B cell (primary cell): ENCODE measurements at regions of chrX and their contacts with region 1.

Region 1: DNA sequence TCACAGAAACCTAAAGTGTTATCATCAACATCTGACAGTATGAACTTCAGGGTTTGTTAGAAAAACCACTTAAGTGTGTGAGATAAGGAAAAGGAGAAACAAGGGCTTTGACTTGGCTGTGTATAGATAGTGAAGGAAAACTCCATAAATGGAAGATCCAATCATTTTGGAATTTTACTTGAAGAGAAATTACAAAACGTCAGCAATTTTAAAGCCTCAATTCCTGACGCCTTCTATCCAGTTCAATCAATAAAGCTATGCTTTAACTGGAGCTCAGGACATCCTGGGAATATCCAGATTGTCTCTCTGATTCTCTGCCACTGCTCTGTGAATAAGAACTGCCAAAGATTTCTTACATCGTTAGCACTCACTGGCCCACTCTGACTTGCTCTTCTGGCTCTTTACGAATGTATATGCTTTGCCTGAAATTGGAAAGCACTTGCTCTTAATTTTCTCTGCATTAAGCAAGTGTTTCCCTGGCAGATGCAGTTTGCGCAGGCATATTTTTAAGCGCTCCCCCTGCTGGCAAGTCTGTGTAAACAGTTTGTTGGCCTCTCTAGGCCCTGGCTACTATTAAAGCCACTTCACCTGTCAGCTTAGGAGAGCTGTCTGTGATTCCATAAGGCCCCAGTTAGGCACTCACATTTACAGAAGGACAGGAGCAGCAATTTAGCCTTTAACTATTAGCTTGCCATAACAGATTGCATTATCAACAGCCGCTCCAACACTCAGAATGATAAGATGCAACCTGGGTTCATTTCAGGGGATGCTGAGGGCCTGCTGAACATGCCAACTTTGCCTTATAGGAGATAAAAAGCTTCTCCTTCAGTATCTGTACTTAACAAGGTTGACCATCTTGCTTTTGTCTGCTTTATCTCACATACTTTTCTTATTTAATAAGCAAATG is 251.4 kb upstream of the DDX53 start:
- DNase-seq: peak; percentile 56
- ATAC-seq: peak; percentile 45
- H3K4me3 ChIP-seq: no peak overlapping the region
- H3K4me3 Mint-ChIP-seq: no peak overlapping the region
- H3K27ac ChIP-seq: no peak overlapping the region
- H3K27ac Mint-ChIP-seq: no peak overlapping the region
- H3K4me1 ChIP-seq: no peaks in the 10 kb centered on the region
- H3K4me1 Mint-ChIP-seq: no peaks in the 10 kb centered on the region
- H3K27me3 ChIP-seq: no peaks in the 10 kb centered on the region
- H3K27me3 Mint-ChIP-seq: no peaks in the 10 kb centered on the region
- CTCF ChIP-seq: peak; percentile 71

Region 2: GRCh38 chrX:22192417-22193060 is 555.8 kb before region 1 on chrX:
- CTCF ChIA-PET with region 1: interaction called, 3 read pairs
- POLR2A ChIA-PET with region 1: no interaction called
- intact Hi-C with region 1: loop called (anchors 5 kb)
- DNase-seq: peak; percentile 60
- ATAC-seq: peak; percentile 64
- H3K4me3 ChIP-seq: no peak overlapping the region
- H3K4me3 Mint-ChIP-seq: peak overlapping the region; percentile 42
- H3K27ac ChIP-seq: no peak overlapping the region
- H3K27ac Mint-ChIP-seq: no peak overlapping the region
- H3K4me1 ChIP-seq: peaks cover 17 to 18% of the 10 kb centered on the region in 2 donors
- H3K4me1 Mint-ChIP-seq: peaks cover 16% of the 10 kb centered on the region
- H3K27me3 ChIP-seq: no peaks in the 10 kb centered on the region
- H3K27me3 Mint-ChIP-seq: no peaks in the 10 kb centered on the region
- CTCF ChIP-seq: peak; percentile 81